ENCODE measurements at regions of chr12 and their contacts with region 1.

Region 1: GRCh38 chr12:110888256-110888991 is 32.0 kb downstream of the MYL2 start:
- DNase-seq: no peak
- CTCF ChIP-seq: no peak

Region 2: DNA sequence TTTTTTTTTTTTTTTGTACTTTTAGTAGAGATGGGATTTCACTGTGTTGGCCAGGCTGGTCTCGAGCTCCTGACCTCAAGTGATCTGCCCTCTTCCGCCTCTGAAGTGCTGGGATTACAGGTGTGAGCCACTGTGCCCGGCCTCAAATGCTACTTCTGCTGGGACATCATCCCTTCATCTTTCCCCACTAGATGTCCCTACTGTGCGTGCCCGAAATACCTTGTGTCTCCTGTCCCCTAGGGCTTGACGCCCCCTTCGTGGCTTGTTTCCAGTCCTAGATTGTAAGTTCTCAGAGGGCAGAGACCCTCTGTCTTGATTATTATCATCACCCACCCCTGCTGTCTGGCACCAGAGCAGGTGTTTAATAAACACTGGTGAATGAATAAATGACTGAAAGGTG is 26.7 kb before region 1 on chr12:
- CTCF ChIA-PET with region 1: interaction called, 10 read pairs
- POLR2A ChIA-PET with region 1: no interaction called
- DNase-seq: no peak
- CTCF ChIP-seq: no peak